CD4-positive, alpha-beta memory T cell (primary cell): ENCODE measurements at regions of chr1 and their contacts with region 1.

Region 1: DNA sequence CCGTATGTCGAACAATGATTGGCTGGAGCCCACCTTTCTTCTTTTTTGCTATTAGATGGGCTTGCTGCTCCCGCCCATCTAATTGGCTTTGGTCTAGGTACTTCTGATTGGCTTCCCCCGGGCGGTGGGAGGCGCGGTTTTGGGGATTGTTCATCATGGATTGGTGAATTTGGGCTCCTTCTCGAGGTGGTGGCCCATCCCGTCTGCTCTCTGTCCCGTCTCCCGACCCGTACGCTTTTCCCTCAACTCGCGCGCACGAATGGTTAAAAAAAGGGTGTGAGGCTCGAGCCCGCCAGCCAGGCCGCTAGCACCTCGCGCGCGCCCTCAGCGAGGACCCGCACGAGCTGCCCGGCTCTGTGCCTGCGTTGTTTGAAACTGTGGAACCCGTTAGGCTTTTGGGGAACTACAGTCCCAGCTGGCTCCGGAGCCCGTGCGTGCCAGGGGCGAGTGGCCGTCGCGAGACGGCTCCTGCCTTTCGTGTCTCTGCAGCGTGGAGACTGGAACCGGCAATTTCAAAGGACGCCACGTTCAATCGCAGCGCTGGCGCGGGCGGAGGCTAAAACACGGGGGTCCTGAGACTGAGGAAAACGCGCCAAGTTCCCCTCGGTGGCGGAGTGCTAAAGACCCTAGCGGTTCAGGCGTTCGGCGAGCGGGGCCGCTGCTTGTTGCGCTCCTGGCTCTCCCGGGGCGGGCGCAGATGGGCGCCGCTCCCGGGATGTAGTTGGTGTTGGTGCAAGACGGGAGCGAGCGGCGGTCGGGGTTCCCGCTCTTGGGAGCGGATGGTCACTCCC is at the start of gene USP1:
- DNase-seq: peak in 4 of 5 donors; percentile 98 to 100 (median 99)
- H3K4me3 ChIP-seq: peak within 1 kb of the TSS; percentile 84 to 97
- H3K4me3 Mint-ChIP-seq: peak within 1 kb of the TSS; percentile 87 to 97 (median 96)
- H3K27ac ChIP-seq: peak within 1 kb of the TSS; percentile 97
- H3K27ac Mint-ChIP-seq: peak within 1 kb of the TSS; percentile 97 to 100 (median 99)
- H3K4me1 ChIP-seq: peaks cover 43% of the 10 kb centered on the region
- H3K4me1 Mint-ChIP-seq: peaks cover 24 to 57% (median 36%) of the 10 kb centered on the region in 4 donors
- H3K27me3 ChIP-seq: no peaks in the 10 kb centered on the region
- H3K27me3 Mint-ChIP-seq: peaks cover 0 to 2% of the 10 kb centered on the region in 2 donors
- total RNA-seq, gene USP1: 46.3 to 50.0 TPM

Region 2: GRCh38 chr1:62384276-62385005 is 52.2 kb before region 1 on chr1:
- CTCF ChIA-PET with region 1: no interaction called
- POLR2A ChIA-PET with region 1: no interaction called
- intact Hi-C with region 1: no loop called
- DNase-seq: no peak
- H3K4me3 ChIP-seq: no peak overlapping the region
- H3K4me3 Mint-ChIP-seq: no peak overlapping the region
- H3K27ac ChIP-seq: no peak overlapping the region
- H3K27ac Mint-ChIP-seq: no peak overlapping the region
- H3K4me1 ChIP-seq: no peaks in the 10 kb centered on the region
- H3K4me1 Mint-ChIP-seq: no peaks in the 10 kb centered on the region
- H3K27me3 ChIP-seq: no peaks in the 10 kb centered on the region
- H3K27me3 Mint-ChIP-seq: peaks cover 1 to 3% of the 10 kb centered on the region in 2 donors

Region 3: GRCh38 chr1:62424411-62424810 is 12.2 kb before region 1 on chr1:
- CTCF ChIA-PET with region 1: no interaction called
- POLR2A ChIA-PET with region 1: interaction called, 14 read pairs
- intact Hi-C with region 1: no loop called
- DNase-seq: no peak
- H3K4me3 ChIP-seq: no peak overlapping the region
- H3K4me3 Mint-ChIP-seq: no peak overlapping the region
- H3K27ac ChIP-seq: no peak overlapping the region
- H3K27ac Mint-ChIP-seq: no peak overlapping the region
- H3K4me1 ChIP-seq: no peaks in the 10 kb centered on the region
- H3K4me1 Mint-ChIP-seq: no peaks in the 10 kb centered on the region
- H3K27me3 ChIP-seq: no peaks in the 10 kb centered on the region
- H3K27me3 Mint-ChIP-seq: peaks cover 0 to 4% of the 10 kb centered on the region in 2 donors

Region 4: GRCh38 chr1:62687903-62688686 is 251.4 kb after region 1 on chr1 and contains the start of gene DOCK7:
- CTCF ChIA-PET with region 1: interaction called, 3 read pairs
- POLR2A ChIA-PET with region 1: interaction called, 11 read pairs
- intact Hi-C with region 1: loop called (anchors 5 kb)
- DNase-seq: peak; percentile 50 to 61 (median 57)
- H3K4me3 ChIP-seq: peak within 1 kb of the TSS; percentile 50 to 79
- H3K4me3 Mint-ChIP-seq: peak within 1 kb of the TSS; percentile 95 to 98 (median 96)
- H3K27ac ChIP-seq: peak within 1 kb of the TSS; percentile 38
- H3K27ac Mint-ChIP-seq: peak within 1 kb of the TSS; percentile 90 to 96 (median 94)
- H3K4me1 ChIP-seq: peaks cover 6% of the 10 kb centered on the region
- H3K4me1 Mint-ChIP-seq: peaks cover 20 to 37% (median 27%) of the 10 kb centered on the region in 4 donors
- H3K27me3 ChIP-seq: no peaks in the 10 kb centered on the region
- H3K27me3 Mint-ChIP-seq: peaks cover 0 to 2% of the 10 kb centered on the region in 2 donors
- total RNA-seq, gene DOCK7: 17.4 to 20.8 TPM

Region 5: GRCh38 chr1:62783723-62784508 is 347.3 kb after region 1 on chr1 and contains the start of gene ATG4C:
- CTCF ChIA-PET with region 1: interaction called, 3 read pairs
- POLR2A ChIA-PET with region 1: interaction called, 8 read pairs
- intact Hi-C with region 1: loop called (anchors 1 kb)
- DNase-seq: peak; percentile 95 to 97 (median 96)
- H3K4me3 ChIP-seq: peak within 1 kb of the TSS; percentile 94 to 100
- H3K4me3 Mint-ChIP-seq: no peak within 1 kb of the TSS
- H3K27ac ChIP-seq: peak within 1 kb of the TSS; percentile 85
- H3K27ac Mint-ChIP-seq: no peak within 1 kb of the TSS
- H3K4me1 ChIP-seq: peaks cover 14% of the 10 kb centered on the region
- H3K4me1 Mint-ChIP-seq: peaks cover 5 to 10% (median 7%) of the 10 kb centered on the region in 4 donors
- H3K27me3 ChIP-seq: no peaks in the 10 kb centered on the region
- H3K27me3 Mint-ChIP-seq: peaks cover 3 to 4% of the 10 kb centered on the region in 2 donors
- total RNA-seq, gene ATG4C: 11.7 to 15.2 TPM

Region 6: DNA sequence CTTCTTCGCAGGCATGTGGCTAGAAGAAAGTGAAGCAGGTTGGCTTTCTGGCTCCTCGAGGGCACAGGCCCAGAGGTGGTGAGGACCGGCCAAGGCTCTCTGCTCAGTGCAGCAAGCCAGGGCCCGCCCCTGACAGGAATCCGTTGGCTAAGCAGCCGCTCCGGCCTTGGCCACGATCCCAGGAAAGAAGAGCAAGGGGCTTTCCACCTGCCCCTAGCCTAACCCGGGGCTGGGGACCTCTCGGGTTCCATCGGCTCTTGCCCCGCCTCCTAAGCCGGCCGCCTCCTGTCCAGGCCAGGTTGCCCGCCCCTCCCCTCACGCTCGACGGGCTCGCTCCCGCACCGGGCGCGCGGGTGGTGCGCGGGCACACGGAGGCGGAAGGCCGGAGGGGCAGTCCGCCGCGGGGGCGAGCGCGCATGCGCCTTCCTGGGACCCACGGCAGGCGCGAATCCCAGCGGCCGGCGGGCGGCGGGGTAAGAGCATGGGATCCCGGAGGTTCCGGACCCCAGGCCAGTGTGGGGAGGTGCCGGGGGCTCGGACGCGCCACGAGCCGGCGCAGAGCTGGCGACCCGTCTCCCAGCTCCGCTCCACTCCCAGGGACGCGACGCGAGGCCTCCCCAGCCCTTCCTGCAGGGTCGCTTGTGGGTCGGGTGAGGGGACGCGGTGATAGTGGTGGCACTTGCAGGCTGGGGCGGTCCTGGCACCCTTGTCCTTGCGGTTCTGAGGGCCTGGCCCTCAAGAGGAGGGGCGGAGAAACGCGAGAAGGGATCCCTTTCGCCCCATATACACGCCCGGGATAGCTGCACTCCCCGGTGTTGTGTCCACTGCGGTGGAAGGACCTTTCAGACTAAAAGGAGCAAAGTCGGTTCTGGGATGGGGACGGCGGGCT is 930.8 kb after region 1 on chr1 and contains the start of gene ALG6:
- CTCF ChIA-PET with region 1: no interaction called
- POLR2A ChIA-PET with region 1: interaction called, 3 read pairs
- intact Hi-C with region 1: loop called (anchors 2 kb)
- DNase-seq: peak; percentile 79 to 92 (median 86)
- H3K4me3 ChIP-seq: peak within 1 kb of the TSS; percentile 67 to 80
- H3K4me3 Mint-ChIP-seq: peak within 1 kb of the TSS; percentile 93 to 98 (median 94)
- H3K27ac ChIP-seq: peak within 1 kb of the TSS; percentile 59
- H3K27ac Mint-ChIP-seq: peak within 1 kb of the TSS; percentile 67 to 92 (median 89)
- H3K4me1 ChIP-seq: peaks cover 21% of the 10 kb centered on the region
- H3K4me1 Mint-ChIP-seq: peaks cover 21 to 36% (median 29%) of the 10 kb centered on the region in 4 donors
- H3K27me3 ChIP-seq: no peaks in the 10 kb centered on the region
- H3K27me3 Mint-ChIP-seq: peaks cover 0 to 7% of the 10 kb centered on the region in 2 donors
- total RNA-seq, gene ALG6: 27.6 to 28.4 TPM